ENCODE measurements at regions of chr14 and their contacts with region 1.

Region 1: GRCh38 chr14:35533357-35534207 is at the start of gene INSM2:
- DNase-seq: peak; percentile 96
- H3K4me3 ChIP-seq: peak within 1 kb of the TSS; percentile 66 to 75
- H3K27ac ChIP-seq: peak within 1 kb of the TSS in 1 of 2 experiments; percentile 90; a peak in 2 of 4 replicates
- H3K4me1 ChIP-seq: no peaks in the 10 kb centered on the region; a peak in 2 of 4 replicates
- H3K27me3 ChIP-seq: peaks cover 27% of the 10 kb centered on the region
- CTCF ChIP-seq: no peak
- EP300 ChIP-seq: no peak
- RAD21 ChIP-seq: no peak
- polyA plus RNA-seq, gene INSM2: 0.15 and 0.67 TPM in 2 replicates

Region 2: DNA sequence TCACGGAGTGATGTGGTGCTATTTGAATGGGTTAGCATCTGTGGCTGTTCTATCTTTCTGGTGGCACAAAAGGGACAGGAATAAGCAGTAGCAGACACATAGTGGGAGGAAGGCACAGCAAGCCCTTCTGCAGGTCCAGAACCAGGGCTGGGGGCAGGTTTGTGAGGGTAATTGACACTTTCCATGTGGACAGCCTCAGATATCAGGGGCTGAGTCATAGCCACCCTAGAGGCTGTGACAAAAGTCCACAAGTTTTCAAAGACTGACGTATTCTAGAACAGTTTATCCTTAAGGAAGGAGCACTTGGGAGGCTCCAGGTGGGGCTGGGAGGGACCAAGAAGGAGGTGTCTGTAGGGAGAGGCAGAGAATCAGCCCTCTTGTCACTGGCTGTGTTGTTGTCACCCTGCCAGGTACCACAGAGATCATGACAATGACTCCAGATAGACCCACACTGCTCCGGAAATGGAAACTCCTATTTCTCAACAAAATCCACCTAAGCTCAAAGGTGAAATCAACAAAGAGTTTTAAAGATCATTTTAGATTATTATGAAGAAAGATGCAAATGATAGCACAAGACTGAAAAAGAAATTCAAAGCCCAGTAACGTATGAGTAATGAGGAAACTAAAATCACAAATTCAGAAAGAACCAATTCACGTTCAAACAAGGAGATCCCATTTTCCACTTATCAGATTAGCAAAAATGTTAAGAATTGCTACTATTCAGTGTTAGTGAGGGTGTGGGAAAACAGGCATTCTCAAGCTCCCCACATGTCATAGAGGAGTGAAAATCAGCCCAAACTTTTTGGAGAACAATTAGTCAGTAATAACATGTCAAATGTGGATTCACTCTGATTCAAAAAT is 177.4 kb before region 1 on chr14:
- CTCF ChIA-PET with region 1: no interaction called
- POLR2A ChIA-PET with region 1: no interaction called
- DNase-seq: no peak
- H3K4me3 ChIP-seq: no peak overlapping the region
- H3K27ac ChIP-seq: no peak overlapping the region
- H3K4me1 ChIP-seq: peaks cover 0 to 10% of the 10 kb centered on the region in 2 experiments; a peak in 2 of 4 replicates
- H3K27me3 ChIP-seq: no peaks in the 10 kb centered on the region
- CTCF ChIP-seq: no peak
- EP300 ChIP-seq: no peak
- RAD21 ChIP-seq: no peak

Region 3: GRCh38 chr14:35416108-35416750 is 117.4 kb before region 1 on chr14:
- CTCF ChIA-PET with region 1: interaction called, 4 read pairs
- POLR2A ChIA-PET with region 1: interaction called, 14 read pairs
- DNase-seq: no peak
- H3K4me3 ChIP-seq: no peak overlapping the region
- H3K27ac ChIP-seq: no peak overlapping the region
- H3K4me1 ChIP-seq: peaks cover 35% of the 10 kb centered on the region in 2 experiments
- H3K27me3 ChIP-seq: no peaks in the 10 kb centered on the region
- CTCF ChIP-seq: no peak
- EP300 ChIP-seq: no peak
- RAD21 ChIP-seq: no peak

Region 4: DNA sequence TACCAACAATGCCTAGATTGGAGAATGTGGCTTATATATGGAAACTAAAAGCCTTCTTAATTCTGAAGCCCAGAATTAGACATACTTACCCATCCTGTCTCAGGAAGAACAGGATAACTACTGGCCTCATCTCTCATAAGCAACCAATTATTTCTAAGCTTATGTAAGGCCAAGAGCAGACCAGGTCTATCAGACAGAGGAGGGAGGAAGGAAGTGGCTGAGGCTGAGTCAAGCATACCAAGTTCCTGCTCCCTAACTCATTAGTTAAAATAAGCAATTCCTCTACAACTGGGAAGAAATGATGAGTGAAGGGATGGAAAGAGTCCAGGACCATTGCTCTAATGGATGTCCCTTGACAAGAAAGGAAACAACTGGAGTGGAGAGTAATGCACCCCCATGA is 26.7 kb before region 1 on chr14:
- CTCF ChIA-PET with region 1: interaction called, 19 read pairs
- POLR2A ChIA-PET with region 1: interaction called, 4 read pairs
- DNase-seq: no peak
- H3K4me3 ChIP-seq: no peak overlapping the region
- H3K27ac ChIP-seq: no peak overlapping the region
- H3K4me1 ChIP-seq: peaks cover 0 to 12% of the 10 kb centered on the region in 2 experiments; a peak in 2 of 4 replicates
- H3K27me3 ChIP-seq: no peaks in the 10 kb centered on the region
- CTCF ChIP-seq: no peak
- EP300 ChIP-seq: no peak
- RAD21 ChIP-seq: no peak

Region 5: DNA sequence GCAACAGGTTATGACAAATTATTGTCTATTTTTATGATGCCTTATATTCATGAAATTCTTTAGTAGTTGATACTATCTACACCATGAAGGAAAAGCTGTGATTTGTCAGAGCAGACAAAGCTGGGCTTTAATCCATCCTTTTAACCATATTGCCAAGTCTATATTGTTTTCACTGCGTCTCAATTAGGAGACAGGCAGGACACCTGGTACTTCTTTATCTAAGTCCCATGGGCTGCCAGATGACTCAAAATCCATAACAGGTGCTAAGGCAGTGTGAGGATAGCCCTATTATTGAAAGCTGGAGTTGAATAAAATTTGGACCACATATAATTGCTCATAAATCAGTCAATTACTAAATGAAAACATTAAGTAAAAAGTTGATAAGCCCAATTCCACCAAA is 23.0 kb after region 1 on chr14:
- CTCF ChIA-PET with region 1: interaction called, 7 read pairs
- POLR2A ChIA-PET with region 1: interaction called, 37 read pairs
- DNase-seq: peak; percentile 71
- H3K4me3 ChIP-seq: no peak overlapping the region
- H3K27ac ChIP-seq: peak overlapping the region in 1 of 2 experiments; percentile 98; a peak in 2 of 4 replicates
- H3K4me1 ChIP-seq: peaks cover 0 to 28% of the 10 kb centered on the region in 2 experiments; a peak in 3 of 4 replicates
- H3K27me3 ChIP-seq: no peaks in the 10 kb centered on the region
- CTCF ChIP-seq: no peak
- EP300 ChIP-seq: peak; percentile 14 to 99; a peak in 3 of 4 replicates
- RAD21 ChIP-seq: no peak; the same call in 1 of the 2 replicates

Region 6: DNA sequence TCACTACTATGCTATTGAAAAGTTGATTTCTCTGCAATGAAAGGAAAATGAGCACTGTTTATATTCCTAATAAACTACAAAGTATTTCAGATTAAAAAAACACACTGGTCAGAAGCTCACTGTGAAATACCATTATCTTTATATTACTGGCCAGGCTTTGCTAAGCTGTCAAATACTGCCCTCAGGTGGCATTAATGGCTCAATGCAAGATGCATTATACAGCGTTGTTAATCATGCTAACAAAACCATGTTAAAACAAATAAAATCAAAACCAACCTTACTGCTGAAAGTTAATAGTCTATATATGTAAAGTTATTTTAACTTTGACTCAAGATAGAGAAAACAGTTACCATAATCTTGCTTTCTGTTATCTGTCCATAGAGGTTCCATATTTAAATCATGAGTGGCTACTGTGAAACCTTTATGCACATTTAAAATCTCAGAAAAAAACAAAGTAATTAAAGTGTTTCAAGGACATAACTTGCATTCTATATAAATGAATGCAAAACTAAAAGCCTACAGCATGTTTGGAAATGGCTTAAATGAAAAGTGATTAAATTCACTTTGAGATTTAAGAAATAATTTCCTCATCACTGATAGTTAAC is 153.9 kb after region 1 on chr14:
- CTCF ChIA-PET with region 1: interaction called, 29 read pairs
- POLR2A ChIA-PET with region 1: interaction called, 11 read pairs
- DNase-seq: peak; percentile 46
- H3K4me3 ChIP-seq: no peak overlapping the region
- H3K27ac ChIP-seq: no peak overlapping the region
- H3K4me1 ChIP-seq: no peaks in the 10 kb centered on the region; a peak in 1 of 4 replicates
- H3K27me3 ChIP-seq: no peaks in the 10 kb centered on the region
- CTCF ChIP-seq: peak; percentile 96
- EP300 ChIP-seq: no peak
- RAD21 ChIP-seq: peak; percentile 100

Measured in SK-N-SH (cell line).